ENCODE measurements at regions of chr5 and their contacts with region 1.

Region 1: DNA sequence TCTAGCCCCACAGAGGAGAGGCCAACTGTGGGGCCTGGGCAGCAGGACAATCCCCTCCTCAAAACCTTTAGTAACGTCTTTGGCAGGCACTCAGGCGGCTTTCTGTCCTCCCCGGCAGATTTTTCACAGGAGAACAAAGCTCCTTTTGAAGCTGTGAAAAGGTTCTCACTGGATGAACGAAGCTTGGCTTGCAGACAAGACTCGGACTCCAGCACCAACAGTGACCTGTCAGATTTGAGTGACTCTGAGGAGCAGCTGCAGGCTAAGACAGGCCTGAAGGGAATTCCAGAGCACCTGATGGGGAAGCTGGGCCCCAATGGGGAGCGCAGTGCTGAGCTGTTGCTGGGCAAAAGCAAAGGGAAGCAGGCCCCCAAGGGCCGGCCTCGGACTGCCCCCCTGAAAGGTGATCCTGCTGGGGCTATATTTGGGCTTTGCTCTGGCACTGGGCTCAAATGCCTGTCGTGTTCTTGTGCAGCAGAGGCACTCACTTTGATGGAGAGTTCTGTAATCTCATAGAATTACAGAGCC is 39.4 kb downstream of the KDM3B start:
- DNase-seq: peak; percentile 37 to 57
- ATAC-seq: peak; percentile 82 to 98 (median 94)
- H3K4me3 ChIP-seq: peak overlapping the region in 2 of 10 donors; percentile 13 to 15
- H3K27ac ChIP-seq: peak overlapping the region; percentile 50 to 86 (median 78)
- H3K4me1 ChIP-seq: peaks cover 0 to 34% (median 9%) of the 10 kb centered on the region in 9 donors
- H3K27me3 ChIP-seq: no peaks in the 10 kb centered on the region
- CTCF ChIP-seq: no peak

Region 2: DNA sequence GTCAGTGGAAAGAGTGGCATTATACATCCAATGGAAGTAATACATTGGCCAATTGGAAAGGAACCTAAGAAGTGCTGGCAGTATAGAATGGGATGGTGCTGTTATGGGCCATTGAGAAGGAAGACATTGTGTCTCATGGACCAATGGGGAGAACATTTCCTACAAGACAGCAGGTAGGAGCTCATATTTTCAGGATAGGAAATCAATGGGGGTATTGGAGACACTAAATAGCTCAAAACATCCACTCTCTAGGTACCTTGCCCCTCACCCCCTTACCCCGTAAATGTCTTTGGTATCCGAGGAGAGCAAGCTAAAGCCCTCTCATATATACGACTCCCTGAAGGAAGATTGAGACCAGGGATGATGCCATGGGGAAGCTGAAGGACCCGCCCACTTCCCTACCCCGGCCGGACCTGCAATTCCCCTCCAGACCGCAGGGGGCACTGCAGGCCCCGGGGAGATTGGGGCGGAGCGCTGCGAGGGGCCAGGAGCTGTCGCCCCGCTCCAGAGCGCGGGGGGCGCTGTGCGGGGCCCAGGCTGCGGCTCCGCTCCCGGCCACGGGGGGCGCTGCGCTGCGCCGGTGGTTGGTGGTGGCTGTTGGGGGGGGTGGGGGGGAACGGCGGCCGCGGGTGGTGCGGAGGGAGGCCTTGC is 39.7 kb before region 1 on chr5 and contains the start of gene KDM3B:
- intact Hi-C with region 1: loop called in 1 of 10 experiments (anchors 5 kb)
- DNase-seq: peak; percentile 76 to 88
- ATAC-seq: peak; percentile 77 to 90 (median 85)
- H3K4me3 ChIP-seq: peak within 1 kb of the TSS; percentile 73 to 99 (median 94)
- H3K27ac ChIP-seq: peak within 1 kb of the TSS; percentile 86 to 99 (median 97)
- H3K4me1 ChIP-seq: peaks cover 8 to 70% (median 51%) of the 10 kb centered on the region in 9 donors
- H3K27me3 ChIP-seq: no peaks in the 10 kb centered on the region
- CTCF ChIP-seq: peak; percentile 82 to 99 (median 90)
- total RNA-seq, gene KDM3B: 31.9 to 57.3 (median 48.3) TPM

Region 3: GRCh38 chr5:138583984-138584637 is 192.2 kb after region 1 on chr5:
- intact Hi-C with region 1: no loop called
- DNase-seq: no peak
- ATAC-seq: no peak
- H3K4me3 ChIP-seq: no peak overlapping the region
- H3K27ac ChIP-seq: no peak overlapping the region
- H3K4me1 ChIP-seq: peaks cover 0 to 5% (median 3%) of the 10 kb centered on the region in 9 donors
- H3K27me3 ChIP-seq: no peaks in the 10 kb centered on the region
- CTCF ChIP-seq: no peak